Transverse colon (tissue), 4 donors: ENCODE measurements at regions of chr11 and their contacts with region 1.

Region 1: DNA sequence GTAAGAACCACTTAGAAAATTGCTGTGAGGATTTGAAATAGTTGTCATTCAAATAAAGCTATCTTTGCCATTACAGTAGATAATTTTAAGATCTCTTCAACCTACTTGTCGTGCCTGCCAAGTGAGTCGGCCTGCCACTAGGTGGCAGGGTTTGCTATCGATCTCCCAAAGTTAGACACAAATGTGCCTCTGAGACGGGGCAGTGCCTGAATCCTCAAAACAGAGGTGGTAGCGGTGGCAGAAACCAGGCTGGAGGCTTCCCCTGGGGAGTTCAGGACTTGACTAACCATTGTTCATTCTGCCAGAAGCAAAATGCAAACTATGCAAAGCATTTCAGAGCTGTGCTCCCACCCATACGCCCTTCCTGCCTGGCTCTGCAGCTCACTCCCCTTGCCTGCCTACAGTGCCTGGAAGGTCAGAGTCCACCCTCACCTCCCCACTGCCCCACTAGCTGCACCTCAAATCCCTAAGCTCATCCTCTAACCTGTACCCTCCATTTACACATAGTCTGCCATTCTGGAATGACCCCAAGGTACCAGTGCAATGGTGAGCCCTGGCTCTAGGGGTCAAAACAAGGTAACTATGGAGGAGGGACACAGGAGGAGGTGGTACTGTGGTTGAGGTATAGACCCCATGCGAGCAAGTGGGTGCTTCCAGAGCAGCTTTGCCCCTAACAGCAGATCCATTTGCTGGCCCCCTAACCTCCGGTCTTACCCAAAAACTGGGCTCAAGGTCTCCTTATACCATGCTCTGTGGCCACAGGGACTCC is 82.1 kb downstream of the C11orf58 start:
- DNase-seq: peak; percentile 80
- H3K4me3 ChIP-seq: no peak overlapping the region
- H3K27ac ChIP-seq: no peak overlapping the region
- H3K4me1 ChIP-seq: peaks cover 0 to 6% (median 3%) of the 10 kb centered on the region in 4 donors
- H3K27me3 ChIP-seq: no peaks in the 10 kb centered on the region
- CTCF ChIP-seq: peak; percentile 74 to 83 (median 82)
- EP300 ChIP-seq: no peak
- POLR2A ChIP-seq: no peak

Region 2: GRCh38 chr11:15663777-15664218 is 1156.7 kb before region 1 on chr11:
- in situ Hi-C with region 1: no loop called
- intact Hi-C with region 1: no loop called
- DNase-seq: no peak
- H3K4me3 ChIP-seq: no peak overlapping the region
- H3K27ac ChIP-seq: no peak overlapping the region
- H3K4me1 ChIP-seq: no peaks in the 10 kb centered on the region
- H3K27me3 ChIP-seq: no peaks in the 10 kb centered on the region
- CTCF ChIP-seq: no peak
- EP300 ChIP-seq: no peak
- POLR2A ChIP-seq: no peak

Region 3: GRCh38 chr11:15770798-15771414 is 1049.6 kb before region 1 on chr11:
- in situ Hi-C with region 1: no loop called
- intact Hi-C with region 1: no loop called
- DNase-seq: peak; percentile 40
- H3K4me3 ChIP-seq: no peak overlapping the region
- H3K27ac ChIP-seq: no peak overlapping the region
- H3K4me1 ChIP-seq: peaks cover 0 to 37% (median 13%) of the 10 kb centered on the region in 4 donors
- H3K27me3 ChIP-seq: no peaks in the 10 kb centered on the region
- CTCF ChIP-seq: peak; percentile 33 to 51 (median 47)
- EP300 ChIP-seq: no peak
- POLR2A ChIP-seq: no peak

Region 4: GRCh38 chr11:18352581-18352980 is 1532.1 kb after region 1 on chr11:
- in situ Hi-C with region 1: no loop called
- intact Hi-C with region 1: loop called (anchors 5 kb)
- DNase-seq: no peak
- H3K4me3 ChIP-seq: no peak overlapping the region
- H3K27ac ChIP-seq: no peak overlapping the region
- H3K4me1 ChIP-seq: no peaks in the 10 kb centered on the region
- H3K27me3 ChIP-seq: no peaks in the 10 kb centered on the region
- CTCF ChIP-seq: no peak
- EP300 ChIP-seq: no peak
- POLR2A ChIP-seq: no peak